HepG2 (cell line): ENCODE measurements at regions of chr20 and their contacts with region 1.

Region 1: DNA sequence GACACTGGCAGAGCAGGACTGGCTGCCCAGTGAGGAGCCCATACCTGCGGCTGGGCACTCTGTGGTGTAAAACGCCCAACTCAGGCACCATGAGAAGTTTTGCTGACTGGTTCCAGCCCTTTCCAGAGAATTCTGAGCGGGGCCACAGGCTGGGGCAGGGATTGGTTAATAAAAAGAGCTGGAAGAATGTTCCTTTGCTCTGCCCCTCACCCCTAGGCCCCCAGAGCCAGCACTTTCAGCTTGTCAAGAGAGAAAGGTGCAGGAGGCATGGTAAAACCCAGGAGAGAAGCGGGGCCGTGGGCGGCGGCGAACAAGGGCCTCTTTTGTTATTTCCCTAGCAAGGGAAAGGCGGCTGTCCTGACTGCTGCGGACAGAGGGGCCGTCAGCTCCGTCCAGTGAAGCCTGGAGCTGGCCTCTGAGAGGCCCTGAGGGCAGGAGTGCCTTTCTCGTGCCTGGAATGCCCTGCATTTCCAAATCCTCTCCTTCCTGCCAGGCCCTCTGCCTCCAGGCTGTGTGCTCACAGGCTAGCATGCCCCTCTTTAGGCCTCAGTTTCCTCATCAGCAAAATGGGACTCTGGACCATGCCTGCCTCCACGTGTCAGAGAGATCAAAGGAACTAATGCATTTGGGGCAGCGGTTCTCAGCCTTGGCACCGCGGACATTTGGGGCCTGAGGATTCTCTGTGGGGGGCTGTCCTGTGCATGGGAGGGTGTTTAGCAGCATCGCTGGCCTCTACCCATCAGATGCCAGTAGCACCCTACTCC is 12.9 kb downstream of the SLC13A3 start:
- DNase-seq: peak; percentile 89
- ATAC-seq: peak; percentile 86
- H3K4me3 ChIP-seq: peak overlapping the region in 1 of 3 experiments; percentile 47; a peak in 1 of 6 replicates
- H3K27ac ChIP-seq: peak overlapping the region; percentile 75
- H3K4me1 ChIP-seq: peaks cover 100% of the 10 kb centered on the region
- H3K27me3 ChIP-seq: no peaks in the 10 kb centered on the region
- CTCF ChIP-seq: peak; percentile 23; the same call in 1 of the 2 replicates
- EP300 ChIP-seq: peak; percentile 45 to 65; a peak in 2 of 4 replicates
- POLR2A ChIP-seq: peak in 1 of 2 experiments; percentile 42; a peak in 1 of 4 replicates
- RAD21 ChIP-seq: peak; percentile 57

Region 2: DNA sequence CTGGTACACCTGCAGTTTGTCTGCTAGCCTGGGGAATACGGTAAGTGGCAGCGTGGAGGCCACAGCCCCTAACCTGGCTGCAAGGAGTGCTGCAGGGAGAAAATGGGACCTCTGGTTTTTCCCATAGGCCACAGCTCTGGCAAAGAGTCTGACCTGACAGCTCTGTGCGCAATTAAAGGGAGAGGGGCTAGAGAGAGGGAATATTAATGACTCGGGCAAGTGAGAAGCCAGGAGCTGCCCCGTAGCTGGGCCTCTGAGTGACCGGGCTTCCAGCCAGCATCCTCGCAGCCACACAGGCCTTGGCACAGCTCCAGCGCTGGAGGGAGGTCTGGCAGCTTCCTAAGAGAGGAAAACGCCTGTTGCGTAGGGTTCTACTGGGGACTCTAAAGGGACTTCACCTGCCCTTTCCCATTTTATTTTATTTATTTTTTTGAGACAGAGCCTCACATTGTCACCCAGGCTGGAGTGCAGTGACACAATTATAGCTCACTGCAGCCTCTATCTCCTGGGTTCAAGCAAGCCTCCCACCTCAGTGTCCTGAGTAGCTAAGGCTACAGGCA is 69.7 kb before region 1 on chr20:
- CTCF ChIA-PET with region 1: no interaction called
- POLR2A ChIA-PET with region 1: interaction called, 3 read pairs
- in situ Hi-C with region 1: loop called (anchors 5 kb)
- intact Hi-C with region 1: no loop called
- DNase-seq: peak; percentile 79
- ATAC-seq: peak; percentile 77
- H3K4me3 ChIP-seq: peak overlapping the region in 1 of 3 experiments; percentile 62; a peak in 4 of 6 replicates
- H3K27ac ChIP-seq: peak overlapping the region; percentile 32
- H3K4me1 ChIP-seq: peaks cover 36% of the 10 kb centered on the region
- H3K27me3 ChIP-seq: no peaks in the 10 kb centered on the region
- CTCF ChIP-seq: peak; percentile 30; the same call in 1 of the 2 replicates
- EP300 ChIP-seq: peak in 1 of 2 experiments; percentile 17; a peak in 1 of 4 replicates
- POLR2A ChIP-seq: no peak
- RAD21 ChIP-seq: peak; percentile 39

Region 3: GRCh38 chr20:46674253-46675083 is 36.2 kb after region 1 on chr20:
- CTCF ChIA-PET with region 1: interaction called, 4 read pairs
- POLR2A ChIA-PET with region 1: interaction called, 42 read pairs
- in situ Hi-C with region 1: no loop called
- intact Hi-C with region 1: loop called (anchors 1 kb)
- DNase-seq: peak; percentile 100
- ATAC-seq: peak; percentile 89
- H3K4me3 ChIP-seq: peak overlapping the region in 1 of 3 experiments; percentile 53; a peak in 2 of 6 replicates
- H3K27ac ChIP-seq: peak overlapping the region; percentile 84
- H3K4me1 ChIP-seq: peaks cover 96% of the 10 kb centered on the region
- H3K27me3 ChIP-seq: no peaks in the 10 kb centered on the region
- CTCF ChIP-seq: peak; percentile 53
- EP300 ChIP-seq: peak; percentile 55 to 95; a peak in 3 of 4 replicates
- POLR2A ChIP-seq: no peak
- RAD21 ChIP-seq: peak; percentile 77